ENCODE measurements at regions of chr5 and their contacts with region 1.

Region 1: DNA sequence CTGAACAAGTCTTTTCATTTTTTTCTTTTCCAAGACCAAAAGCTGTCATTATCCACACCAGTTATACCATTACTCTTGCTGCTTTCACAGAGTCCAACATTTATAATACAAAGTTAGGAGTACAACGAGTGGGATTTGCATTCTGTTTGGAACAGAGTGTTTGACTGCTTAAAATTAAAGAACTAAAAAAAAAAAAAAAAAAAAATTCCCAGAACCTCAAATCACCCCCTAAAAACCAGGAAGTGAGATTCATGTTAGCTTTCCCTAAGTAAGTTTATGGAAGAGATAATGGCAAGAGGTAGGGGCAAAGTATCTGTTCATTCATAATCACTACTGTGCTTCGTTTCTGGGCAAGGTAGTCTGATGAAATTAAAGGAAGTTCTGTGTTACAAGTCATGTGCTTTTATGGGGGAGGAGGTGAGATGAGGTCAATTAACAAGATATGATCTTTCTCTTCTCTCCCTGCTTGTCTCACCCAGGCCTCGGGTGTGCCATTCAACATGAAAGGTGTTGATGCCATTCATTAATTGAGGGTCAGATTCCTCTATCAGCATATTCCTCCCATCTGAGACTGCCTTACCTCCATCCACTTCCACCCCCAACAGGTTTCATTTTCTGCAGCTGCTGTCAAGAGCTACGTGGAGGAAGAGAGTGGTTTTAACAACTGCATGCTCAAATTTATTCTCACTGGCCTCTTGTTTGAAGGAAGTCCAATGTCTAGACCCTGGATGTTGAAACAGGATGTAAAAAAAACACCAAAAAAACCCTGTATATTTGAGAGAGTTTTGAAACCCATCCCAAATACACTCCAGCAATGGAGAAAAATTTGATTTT is 58.1 kb downstream of the MARCHF3 start:
- DNase-seq: peak in 7 of 9 donors; percentile 12 to 44 (median 32)
- ATAC-seq: peak; percentile 80
- H3K4me3 ChIP-seq: peak overlapping the region; percentile 34
- H3K4me3 Mint-ChIP-seq: peak overlapping the region; percentile 62 to 93 (median 86)
- H3K27ac ChIP-seq: peak overlapping the region; percentile 53
- H3K27ac Mint-ChIP-seq: peak overlapping the region; percentile 79 to 97 (median 87)
- H3K4me1 ChIP-seq: peaks cover 7 to 21% of the 10 kb centered on the region in 2 donors
- H3K4me1 Mint-ChIP-seq: peaks cover 24 to 56% (median 38%) of the 10 kb centered on the region in 7 donors
- H3K27me3 ChIP-seq: no peaks in the 10 kb centered on the region
- H3K27me3 Mint-ChIP-seq: no peaks in the 10 kb centered on the region

Region 2: GRCh38 chr5:126811515-126812198 is 160.6 kb before region 1 on chr5:
- CTCF ChIA-PET with region 1: no interaction called
- POLR2A ChIA-PET with region 1: no interaction called
- intact Hi-C with region 1: no loop called
- DNase-seq: peak in 8 of 9 donors; percentile 5 to 63 (median 44)
- ATAC-seq: peak; percentile 81
- H3K4me3 ChIP-seq: no peak overlapping the region
- H3K4me3 Mint-ChIP-seq: peak overlapping the region in 6 of 10 donors; percentile 21 to 77 (median 38)
- H3K27ac ChIP-seq: peak overlapping the region; percentile 57
- H3K27ac Mint-ChIP-seq: peak overlapping the region; percentile 71 to 97 (median 87)
- H3K4me1 ChIP-seq: peaks cover 8 to 11% of the 10 kb centered on the region in 2 donors
- H3K4me1 Mint-ChIP-seq: peaks cover 0 to 54% (median 25%) of the 10 kb centered on the region in 7 donors
- H3K27me3 ChIP-seq: no peaks in the 10 kb centered on the region
- H3K27me3 Mint-ChIP-seq: no peaks in the 10 kb centered on the region

Region 3: DNA sequence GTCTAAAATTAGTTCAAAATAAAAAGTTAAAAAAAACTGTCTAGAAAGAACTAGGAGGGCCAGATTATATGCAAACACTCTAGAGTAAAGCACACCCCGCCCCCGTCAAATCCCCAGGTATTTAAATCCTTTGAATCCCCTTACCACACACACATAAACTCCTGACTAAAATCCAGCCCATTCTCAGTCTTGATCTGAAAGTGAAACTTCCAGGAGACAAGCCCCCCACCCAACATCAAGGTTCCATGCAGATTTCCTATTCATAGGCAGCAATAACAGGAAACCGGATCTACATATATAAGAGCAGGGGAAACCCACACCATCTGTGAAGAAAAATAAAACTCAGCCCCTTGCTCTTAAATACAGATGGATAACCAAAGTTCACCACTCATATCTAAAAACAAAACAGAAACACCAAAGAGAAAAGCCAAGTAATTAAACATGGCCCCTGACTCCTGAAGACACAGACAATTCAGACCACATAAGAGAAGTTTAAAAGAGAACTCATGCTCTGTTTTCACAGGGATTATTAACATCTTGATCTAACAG is 15.8 kb after region 1 on chr5:
- CTCF ChIA-PET with region 1: no interaction called
- POLR2A ChIA-PET with region 1: interaction called, 5 read pairs
- intact Hi-C with region 1: loop called (anchors 1 to 2 kb)
- DNase-seq: peak in 8 of 9 donors; percentile 30 to 81 (median 72)
- ATAC-seq: peak; percentile 94
- H3K4me3 ChIP-seq: no peak overlapping the region
- H3K4me3 Mint-ChIP-seq: peak overlapping the region; percentile 59 to 85 (median 76)
- H3K27ac ChIP-seq: peak overlapping the region; percentile 74
- H3K27ac Mint-ChIP-seq: peak overlapping the region; percentile 79 to 99 (median 94)
- H3K4me1 ChIP-seq: peaks cover 0 to 23% of the 10 kb centered on the region in 2 donors
- H3K4me1 Mint-ChIP-seq: peaks cover 24 to 78% (median 53%) of the 10 kb centered on the region in 7 donors
- H3K27me3 ChIP-seq: no peaks in the 10 kb centered on the region
- H3K27me3 Mint-ChIP-seq: no peaks in the 10 kb centered on the region

Region 4: DNA sequence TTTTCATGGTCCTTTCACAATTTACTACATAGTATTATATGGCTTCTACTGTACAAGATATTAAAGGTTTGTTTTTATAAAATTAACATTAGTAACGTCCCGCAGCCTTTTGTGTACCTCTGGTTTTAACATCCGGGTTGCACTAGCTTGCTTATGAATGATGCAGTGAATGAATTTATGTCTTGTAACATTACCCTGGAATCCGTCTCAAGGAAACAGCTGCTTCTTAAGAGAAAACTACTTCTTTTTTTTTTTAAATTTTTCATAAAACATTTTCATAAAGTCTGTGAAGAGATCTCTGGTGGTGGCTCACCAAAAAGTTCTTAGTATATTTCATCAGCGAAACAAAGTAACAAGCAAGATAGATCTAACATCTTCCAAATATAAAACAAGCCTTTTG is 34.5 kb after region 1 on chr5:
- CTCF ChIA-PET with region 1: interaction called, 4 read pairs
- POLR2A ChIA-PET with region 1: no interaction called
- intact Hi-C with region 1: loop called in 1 of 2 experiments (anchors 5 kb)
- DNase-seq: no peak
- ATAC-seq: no peak
- H3K4me3 ChIP-seq: no peak overlapping the region
- H3K4me3 Mint-ChIP-seq: peak overlapping the region in 7 of 10 donors; percentile 8 to 53 (median 25)
- H3K27ac ChIP-seq: no peak overlapping the region
- H3K27ac Mint-ChIP-seq: peak overlapping the region in 2 of 9 donors; percentile 36 to 46
- H3K4me1 ChIP-seq: peaks cover 0 to under 1% of the 10 kb centered on the region in 2 donors
- H3K4me1 Mint-ChIP-seq: peaks cover under 1 to 36% (median 10%) of the 10 kb centered on the region in 7 donors
- H3K27me3 ChIP-seq: no peaks in the 10 kb centered on the region
- H3K27me3 Mint-ChIP-seq: no peaks in the 10 kb centered on the region

Region 5: DNA sequence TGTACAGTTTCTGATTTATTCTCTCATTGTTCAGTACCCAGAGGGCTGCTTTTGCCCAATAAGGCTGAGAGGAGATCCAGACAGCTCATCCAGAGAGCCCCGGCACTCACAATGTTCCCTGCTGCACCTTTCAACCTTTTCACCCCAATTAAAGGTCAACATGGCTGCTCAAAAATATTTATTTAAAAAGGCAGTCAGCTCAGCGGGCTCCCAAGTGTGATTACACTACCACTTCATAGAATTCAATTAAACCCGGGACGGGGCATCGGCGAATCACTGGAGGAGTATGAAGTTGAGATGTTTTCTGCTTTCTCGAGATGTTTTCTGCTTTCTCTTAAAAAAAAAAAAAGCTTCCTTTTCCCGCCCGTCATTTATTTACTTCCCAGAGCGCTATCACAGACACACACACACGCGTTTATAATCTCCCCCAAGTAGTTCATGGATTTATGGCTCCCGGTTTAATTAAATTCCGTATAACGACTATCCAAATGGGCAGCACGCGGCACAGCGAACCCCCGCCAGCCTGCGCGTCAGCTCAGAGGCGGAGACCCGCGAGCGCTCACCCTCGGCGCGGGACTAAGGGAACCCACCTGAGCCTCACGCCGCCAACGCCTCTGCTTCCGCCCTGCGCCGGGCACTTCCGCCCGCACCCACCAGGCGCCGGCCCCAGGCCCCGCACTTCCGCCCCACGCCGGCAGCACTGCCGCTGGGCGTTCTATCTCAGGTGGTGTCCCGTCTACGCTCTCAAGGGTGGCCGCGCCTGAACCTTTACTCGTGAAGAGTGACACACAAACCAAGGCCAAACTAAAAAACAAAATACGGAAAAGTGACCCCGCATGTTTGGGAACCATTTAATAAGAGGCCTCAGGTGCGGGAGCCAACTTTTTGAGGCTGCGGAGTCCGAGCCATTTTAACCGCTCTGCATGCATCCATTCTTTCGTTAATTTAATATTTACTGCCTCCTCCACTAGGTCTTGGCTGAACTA is 100.9 kb after region 1 on chr5 and contains the start of gene C5orf63:
- CTCF ChIA-PET with region 1: no interaction called
- POLR2A ChIA-PET with region 1: no interaction called
- intact Hi-C with region 1: loop called in 1 of 2 experiments (anchors 5 kb)
- DNase-seq: peak; percentile 41 to 78 (median 69)
- ATAC-seq: peak; percentile 91
- H3K4me3 ChIP-seq: peak within 1 kb of the TSS; percentile 83
- H3K4me3 Mint-ChIP-seq: peak within 1 kb of the TSS; percentile 89 to 100 (median 92)
- H3K27ac ChIP-seq: peak within 1 kb of the TSS; percentile 69
- H3K27ac Mint-ChIP-seq: peak within 1 kb of the TSS; percentile 74 to 98 (median 93)
- H3K4me1 ChIP-seq: peaks cover 8 to 10% of the 10 kb centered on the region in 2 donors
- H3K4me1 Mint-ChIP-seq: peaks cover 17 to 39% (median 29%) of the 10 kb centered on the region in 7 donors
- H3K27me3 ChIP-seq: no peaks in the 10 kb centered on the region
- H3K27me3 Mint-ChIP-seq: no peaks in the 10 kb centered on the region
- total RNA-seq, gene C5orf63: 9.2 to 20.7 (median 11.9) TPM

Measured in naive thymus-derived CD4-positive, alpha-beta T cell (primary cell).